HEK293 (cell line): ENCODE measurements at regions of chr1 and their contacts with region 1.

Region 1: GRCh38 chr1:151156515-151156819 is at the start of gene TNFAIP8L2:
- H3K4me3 ChIP-seq: no peak within 1 kb of the TSS
- H3K27ac ChIP-seq: no peak within 1 kb of the TSS
- H3K4me1 ChIP-seq: no peaks in the 10 kb centered on the region
- CTCF ChIP-seq: no peak

Region 2: DNA sequence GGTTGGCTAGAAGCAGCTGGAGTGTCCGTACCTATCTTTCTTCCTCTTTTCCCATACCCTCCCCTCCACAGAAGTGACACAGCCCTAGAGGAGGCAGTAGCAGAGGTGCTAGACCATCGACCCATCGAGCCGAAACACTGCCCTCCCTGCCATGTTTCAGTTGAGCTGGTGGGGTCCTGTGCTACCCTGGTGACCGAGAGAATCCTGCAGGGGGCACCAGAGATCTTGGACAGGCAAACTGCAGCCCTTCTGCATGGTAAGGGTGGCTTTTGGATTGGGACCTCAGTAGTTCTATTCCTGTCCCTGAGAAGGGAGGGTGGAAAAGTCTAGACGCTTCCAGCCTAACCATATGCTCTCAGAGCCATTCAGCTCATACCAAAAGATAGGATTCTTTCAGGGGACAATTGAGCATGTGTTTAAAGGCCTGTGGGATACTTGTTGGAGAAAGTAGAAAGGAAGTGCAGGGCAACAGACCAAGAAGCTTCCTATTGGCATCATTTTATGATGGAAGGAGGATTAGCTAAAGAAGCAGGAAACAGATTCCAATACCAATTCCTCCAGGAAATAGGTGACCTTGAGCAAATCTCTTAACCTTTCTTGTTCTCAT is 131.8 kb before region 1 on chr1:
- CTCF ChIA-PET with region 1: interaction called, 10 read pairs
- POLR2A ChIA-PET with region 1: no interaction called
- H3K4me3 ChIP-seq: no peak overlapping the region
- H3K27ac ChIP-seq: no peak overlapping the region
- H3K4me1 ChIP-seq: no peaks in the 10 kb centered on the region
- CTCF ChIP-seq: peak; percentile 66

Region 3: DNA sequence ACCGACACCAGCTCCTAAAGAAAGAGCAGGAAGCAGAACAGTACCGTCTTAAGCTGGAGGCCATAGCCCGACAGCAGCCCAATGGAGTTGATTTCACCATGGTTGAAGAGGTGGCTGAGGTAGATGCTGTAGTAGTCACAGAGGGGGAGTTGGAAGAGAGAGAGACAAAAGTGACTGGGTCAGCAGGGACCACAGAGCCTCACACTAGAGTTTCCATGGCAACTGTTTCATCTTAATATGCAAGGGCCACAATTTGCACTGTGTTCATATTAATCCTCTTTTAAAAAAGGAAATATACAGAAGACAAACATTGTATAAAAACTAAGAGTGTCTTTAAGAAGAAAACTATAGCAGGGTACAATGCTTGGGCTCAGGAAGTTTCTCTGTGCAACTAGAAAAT is 38.4 kb before region 1 on chr1:
- CTCF ChIA-PET with region 1: no interaction called
- POLR2A ChIA-PET with region 1: no interaction called
- H3K4me3 ChIP-seq: no peak overlapping the region
- H3K27ac ChIP-seq: no peak overlapping the region
- H3K4me1 ChIP-seq: no peaks in the 10 kb centered on the region
- CTCF ChIP-seq: no peak

Region 4: GRCh38 chr1:151945725-151946364 is 789.4 kb after region 1 on chr1:
- CTCF ChIA-PET with region 1: no interaction called
- POLR2A ChIA-PET with region 1: no interaction called
- H3K4me3 ChIP-seq: no peak overlapping the region
- H3K27ac ChIP-seq: no peak overlapping the region
- H3K4me1 ChIP-seq: peaks cover 15% of the 10 kb centered on the region
- CTCF ChIP-seq: no peak